ENCODE measurements at regions of chr3 and their contacts with region 1.

Region 1: GRCh38 chr3:9387322-9387655 is 10.1 kb upstream of the SETD5 start:
- DNase-seq: no peak
- ATAC-seq: no peak
- H3K4me3 ChIP-seq: no peak overlapping the region
- H3K27ac ChIP-seq: no peak overlapping the region
- H3K4me1 ChIP-seq: peaks cover 21% of the 10 kb centered on the region
- H3K27me3 ChIP-seq: no peaks in the 10 kb centered on the region
- CTCF ChIP-seq: no peak

Region 2: DNA sequence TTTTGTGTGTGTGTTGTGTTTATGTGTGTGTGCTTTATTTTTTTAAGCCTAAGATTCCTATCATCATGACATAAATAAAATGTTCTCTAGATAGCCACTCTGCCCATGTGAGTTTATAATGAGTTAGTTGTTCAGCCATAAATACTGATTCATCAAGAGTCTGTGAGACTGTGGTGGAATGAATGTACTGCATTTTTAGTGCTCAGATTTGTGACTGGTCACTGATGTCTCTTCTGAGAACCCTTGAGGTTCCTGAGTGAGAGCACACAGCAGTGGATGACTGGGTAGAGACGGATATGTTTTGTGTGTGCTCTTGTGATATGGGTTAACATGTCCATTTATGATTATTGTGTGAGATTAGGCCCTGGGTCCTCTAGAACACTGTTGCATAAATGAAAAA is 61.4 kb after region 1 on chr3:
- intact Hi-C with region 1: loop called in 1 of 2 experiments (anchors 5 kb)
- DNase-seq: no peak
- ATAC-seq: peak in 1 of 4 donors; percentile 38
- H3K4me3 ChIP-seq: no peak overlapping the region
- H3K27ac ChIP-seq: no peak overlapping the region
- H3K4me1 ChIP-seq: no peaks in the 10 kb centered on the region
- H3K27me3 ChIP-seq: no peaks in the 10 kb centered on the region
- CTCF ChIP-seq: no peak

Region 3: GRCh38 chr3:9468460-9468859 is 81.2 kb after region 1 on chr3:
- intact Hi-C with region 1: loop called in 1 of 2 experiments (anchors 5 kb)
- DNase-seq: no peak
- ATAC-seq: peak in 2 of 4 donors; percentile 20 to 22
- H3K4me3 ChIP-seq: no peak overlapping the region
- H3K27ac ChIP-seq: no peak overlapping the region
- H3K4me1 ChIP-seq: no peaks in the 10 kb centered on the region
- H3K27me3 ChIP-seq: no peaks in the 10 kb centered on the region
- CTCF ChIP-seq: no peak

Measured in psoas muscle (tissue), 8 donors.